CD14-positive monocyte (primary cell): ENCODE measurements at regions of chr6 and their contacts with region 1.

Region 1: DNA sequence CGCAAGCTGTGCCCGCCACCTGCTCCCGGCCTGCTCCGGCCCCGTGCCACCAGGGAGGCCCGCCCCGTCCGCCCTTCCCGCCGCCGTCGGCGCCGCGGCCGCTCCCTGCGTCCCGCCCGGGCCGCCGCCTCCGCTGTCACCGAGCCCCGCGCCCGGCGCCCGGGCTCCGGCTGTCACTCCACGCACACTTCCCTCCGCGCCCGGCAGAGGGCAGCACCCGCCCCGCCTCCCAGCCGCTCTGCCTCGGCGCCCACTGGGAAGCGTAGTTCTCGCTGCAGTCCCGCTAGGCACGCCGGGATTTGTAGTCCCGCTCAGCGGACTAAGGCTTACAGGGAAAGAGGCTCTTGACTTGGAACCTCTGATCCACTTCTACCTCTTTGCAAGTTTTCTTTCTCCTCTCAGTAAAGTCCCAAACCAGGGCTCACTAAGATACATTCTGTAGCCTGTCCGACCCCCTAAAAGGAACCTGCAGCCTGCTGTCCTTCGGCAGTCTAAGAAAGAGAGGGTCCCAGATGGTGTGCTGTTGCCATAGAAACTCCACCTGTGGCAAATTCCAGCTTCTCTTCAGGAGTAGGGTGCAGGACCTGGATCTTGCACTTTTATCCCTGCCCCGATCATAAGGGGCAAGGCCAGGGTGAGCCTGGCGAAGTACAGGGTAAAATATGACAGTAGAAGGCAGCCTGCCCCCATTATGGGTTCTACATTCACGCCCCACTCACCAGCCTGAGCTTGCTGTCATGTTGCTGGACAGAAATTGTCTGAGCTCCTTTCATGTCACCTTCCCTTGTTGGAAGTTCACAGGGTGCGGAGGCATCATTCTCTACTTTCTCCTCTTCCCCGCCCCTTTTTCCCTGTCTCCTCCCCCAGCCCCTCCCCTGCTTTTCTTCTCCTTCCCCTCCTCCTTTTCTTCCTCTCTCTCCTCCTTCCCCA is at the start of gene TFEB:
- DNase-seq: peak; percentile 85 to 89 (median 89)
- H3K4me3 ChIP-seq: peak within 1 kb of the TSS; percentile 66 to 88 (median 87)
- H3K4me3 Mint-ChIP-seq: peak within 1 kb of the TSS; percentile 77 to 82
- H3K27ac ChIP-seq: peak within 1 kb of the TSS; percentile 78 to 84
- H3K27ac Mint-ChIP-seq: peak within 1 kb of the TSS; percentile 26 to 88 (median 82)
- H3K4me1 ChIP-seq: peaks cover 39 to 43% of the 10 kb centered on the region in 2 donors
- H3K4me1 Mint-ChIP-seq: peaks cover 35% of the 10 kb centered on the region
- H3K27me3 ChIP-seq: no peaks in the 10 kb centered on the region
- H3K27me3 Mint-ChIP-seq: peaks cover 0 to 5% (median 2%) of the 10 kb centered on the region in 3 donors
- CTCF ChIP-seq: peak; percentile 88
- polyA plus RNA-seq, gene TFEB: 42.6 to 60.0 (median 55.0) TPM

Region 2: GRCh38 chr6:41072676-41073623 is 662.7 kb before region 1 on chr6 and contains the start of gene NFYA:
- intact Hi-C with region 1: loop called in 1 of 2 experiments (anchors 10 kb)
- DNase-seq: peak in 2 of 3 donors; percentile 99 to 100
- H3K4me3 ChIP-seq: peak within 1 kb of the TSS; percentile 80 to 88 (median 88)
- H3K4me3 Mint-ChIP-seq: peak within 1 kb of the TSS; percentile 92 to 93
- H3K27ac ChIP-seq: peak within 1 kb of the TSS; percentile 96 to 98
- H3K27ac Mint-ChIP-seq: peak within 1 kb of the TSS; percentile 97 to 99 (median 98)
- H3K4me1 ChIP-seq: peaks cover 18 to 27% of the 10 kb centered on the region in 2 donors
- H3K4me1 Mint-ChIP-seq: peaks cover 29% of the 10 kb centered on the region
- H3K27me3 ChIP-seq: no peaks in the 10 kb centered on the region
- H3K27me3 Mint-ChIP-seq: no peaks in the 10 kb centered on the region
- CTCF ChIP-seq: peak; percentile 72
- polyA plus RNA-seq, gene NFYA: 9.7 to 21.4 (median 10.7) TPM

Region 3: GRCh38 chr6:41683510-41684310 is 52.0 kb before region 1 on chr6:
- intact Hi-C with region 1: no loop called
- DNase-seq: peak; percentile 59 to 73 (median 61)
- H3K4me3 ChIP-seq: peak overlapping the region; percentile 40 to 77 (median 56)
- H3K4me3 Mint-ChIP-seq: peak overlapping the region; percentile 83 to 88
- H3K27ac ChIP-seq: no peak overlapping the region
- H3K27ac Mint-ChIP-seq: peak overlapping the region in 3 of 7 donors; percentile 54 to 77 (median 63)
- H3K4me1 ChIP-seq: peaks cover 22 to 23% of the 10 kb centered on the region in 2 donors
- H3K4me1 Mint-ChIP-seq: peaks cover 18% of the 10 kb centered on the region
- H3K27me3 ChIP-seq: no peaks in the 10 kb centered on the region
- H3K27me3 Mint-ChIP-seq: peaks cover 1 to 8% (median 3%) of the 10 kb centered on the region in 3 donors
- CTCF ChIP-seq: peak; percentile 96

Region 4: GRCh38 chr6:41700463-41701347 is 35.0 kb before region 1 on chr6:
- intact Hi-C with region 1: loop called in 1 of 2 experiments (anchors 5 kb)
- DNase-seq: no peak
- H3K4me3 ChIP-seq: no peak overlapping the region
- H3K4me3 Mint-ChIP-seq: no peak overlapping the region
- H3K27ac ChIP-seq: no peak overlapping the region
- H3K27ac Mint-ChIP-seq: peak overlapping the region in 4 of 7 donors; percentile 6 to 76 (median 53)
- H3K4me1 ChIP-seq: peaks cover 14 to 19% of the 10 kb centered on the region in 2 donors
- H3K4me1 Mint-ChIP-seq: peaks cover 25% of the 10 kb centered on the region
- H3K27me3 ChIP-seq: no peaks in the 10 kb centered on the region
- H3K27me3 Mint-ChIP-seq: peaks cover 0 to 1% (median 0%) of the 10 kb centered on the region in 3 donors
- CTCF ChIP-seq: no peak

Region 5: GRCh38 chr6:41705996-41706835 is 29.5 kb before region 1 on chr6:
- intact Hi-C with region 1: loop called (anchors 2 to 5 kb)
- DNase-seq: peak; percentile 90 to 94 (median 92)
- H3K4me3 ChIP-seq: peak overlapping the region in 2 of 3 experiments; percentile 6 to 66
- H3K4me3 Mint-ChIP-seq: peak overlapping the region; percentile 61 to 82
- H3K27ac ChIP-seq: peak overlapping the region; percentile 87 to 89
- H3K27ac Mint-ChIP-seq: peak overlapping the region; percentile 92 to 97 (median 95)
- H3K4me1 ChIP-seq: peaks cover 49 to 54% of the 10 kb centered on the region in 2 donors
- H3K4me1 Mint-ChIP-seq: peaks cover 65% of the 10 kb centered on the region
- H3K27me3 ChIP-seq: no peaks in the 10 kb centered on the region
- H3K27me3 Mint-ChIP-seq: no peaks in the 10 kb centered on the region
- CTCF ChIP-seq: peak; percentile 98

Region 6: GRCh38 chr6:41779793-41780545 is 44.3 kb after region 1 on chr6 and contains the start of gene FRS3:
- intact Hi-C with region 1: loop called in 1 of 2 experiments (anchors 5 kb)
- DNase-seq: peak; percentile 94 to 96 (median 95)
- H3K4me3 ChIP-seq: peak within 1 kb of the TSS; percentile 61 to 84 (median 80)
- H3K4me3 Mint-ChIP-seq: peak within 1 kb of the TSS; percentile 89 to 92
- H3K27ac ChIP-seq: peak within 1 kb of the TSS in 1 of 2 donors; percentile 57
- H3K27ac Mint-ChIP-seq: peak within 1 kb of the TSS in 6 of 7 donors; percentile 56 to 91 (median 83)
- H3K4me1 ChIP-seq: peaks cover 56 to 74% of the 10 kb centered on the region in 2 donors
- H3K4me1 Mint-ChIP-seq: peaks cover 59% of the 10 kb centered on the region
- H3K27me3 ChIP-seq: peaks cover 0 to 3% of the 10 kb centered on the region in 2 donors
- H3K27me3 Mint-ChIP-seq: peaks cover 3 to 13% (median 6%) of the 10 kb centered on the region in 3 donors
- CTCF ChIP-seq: peak; percentile 78
- polyA plus RNA-seq, gene FRS3: 1.3 to 7.0 (median 2.6) TPM

Region 7: GRCh38 chr6:41787219-41787917 is 51.7 kb after region 1 on chr6 and contains the start of gene TOMM6:
- intact Hi-C with region 1: loop called (anchors 2 to 5 kb)
- DNase-seq: peak; percentile 92 to 93 (median 93)
- H3K4me3 ChIP-seq: peak within 1 kb of the TSS; percentile 78 to 99 (median 83)
- H3K4me3 Mint-ChIP-seq: peak within 1 kb of the TSS; percentile 88 to 94
- H3K27ac ChIP-seq: peak within 1 kb of the TSS; percentile 82 to 86
- H3K27ac Mint-ChIP-seq: peak within 1 kb of the TSS; percentile 93 to 97 (median 95)
- H3K4me1 ChIP-seq: peaks cover 30 to 58% of the 10 kb centered on the region in 2 donors
- H3K4me1 Mint-ChIP-seq: peaks cover 32% of the 10 kb centered on the region
- H3K27me3 ChIP-seq: no peaks in the 10 kb centered on the region
- H3K27me3 Mint-ChIP-seq: peaks cover 0 to 5% (median 4%) of the 10 kb centered on the region in 3 donors
- CTCF ChIP-seq: peak; percentile 87
- polyA plus RNA-seq, gene TOMM6: 271 to 382 (median 343) TPM